ENCODE measurements at regions of chr6 and their contacts with region 1.

Region 1: DNA sequence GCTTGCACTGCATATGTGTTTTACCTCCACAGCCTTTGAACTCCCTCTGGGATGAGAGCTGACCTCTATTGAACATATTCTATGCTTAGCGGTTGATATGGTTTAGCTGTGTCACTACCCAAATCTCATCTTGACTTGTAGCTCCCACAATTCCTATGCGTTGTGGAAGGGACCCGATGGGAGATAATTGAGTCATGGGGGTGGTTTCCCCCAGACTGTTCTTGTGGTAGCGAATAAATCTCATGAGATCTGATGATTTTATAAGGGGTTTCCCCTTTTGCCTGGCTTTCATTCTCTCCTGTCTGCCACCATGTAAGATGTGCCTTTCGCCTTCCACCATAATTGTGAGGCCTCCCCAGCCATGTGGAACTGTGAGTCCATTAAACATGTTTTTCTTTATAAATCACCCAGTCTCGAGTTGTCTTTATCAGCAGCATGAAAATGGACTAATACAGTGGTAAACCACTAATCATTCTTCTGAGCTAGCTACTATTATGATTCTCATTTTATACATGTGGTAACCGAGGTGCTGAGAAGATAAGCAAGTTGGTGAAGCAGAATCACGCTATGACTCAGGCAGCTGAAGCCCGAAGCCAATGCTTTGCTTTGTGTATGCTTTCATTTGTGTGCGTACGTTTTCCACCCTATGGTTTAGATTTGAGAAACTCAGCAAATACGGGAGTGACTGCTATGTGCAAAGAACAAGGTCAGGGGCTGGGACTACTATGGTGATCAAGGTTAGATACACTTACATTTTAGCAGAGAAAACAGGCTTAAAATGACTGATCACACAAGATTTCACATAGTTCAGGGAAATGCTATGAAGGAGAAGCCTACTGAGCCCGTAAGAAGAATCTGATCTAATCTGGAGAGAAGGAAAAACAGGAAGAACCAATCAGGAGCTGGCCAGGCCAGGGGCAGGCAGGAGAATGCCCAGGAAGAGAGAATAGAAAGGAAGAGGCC is 363.5 kb downstream of the ESR1 start:
- DNase-seq: no peak
- ATAC-seq: peak; percentile 81
- H3K4me3 Mint-ChIP-seq: peak overlapping the region; percentile 61
- H3K27ac Mint-ChIP-seq: peak overlapping the region; percentile 93
- H3K4me1 Mint-ChIP-seq: peaks cover 38% of the 10 kb centered on the region
- H3K27me3 Mint-ChIP-seq: no peaks in the 10 kb centered on the region
- CTCF ChIP-seq: no peak

Region 2: GRCh38 chr6:151993364-151993763 is 177.6 kb before region 1 on chr6:
- CTCF ChIA-PET with region 1: no interaction called
- POLR2A ChIA-PET with region 1: no interaction called
- intact Hi-C with region 1: no loop called
- DNase-seq: no peak
- ATAC-seq: no peak
- H3K4me3 Mint-ChIP-seq: no peak overlapping the region
- H3K27ac Mint-ChIP-seq: no peak overlapping the region
- H3K4me1 Mint-ChIP-seq: no peaks in the 10 kb centered on the region
- H3K27me3 Mint-ChIP-seq: no peaks in the 10 kb centered on the region
- CTCF ChIP-seq: no peak

Region 3: DNA sequence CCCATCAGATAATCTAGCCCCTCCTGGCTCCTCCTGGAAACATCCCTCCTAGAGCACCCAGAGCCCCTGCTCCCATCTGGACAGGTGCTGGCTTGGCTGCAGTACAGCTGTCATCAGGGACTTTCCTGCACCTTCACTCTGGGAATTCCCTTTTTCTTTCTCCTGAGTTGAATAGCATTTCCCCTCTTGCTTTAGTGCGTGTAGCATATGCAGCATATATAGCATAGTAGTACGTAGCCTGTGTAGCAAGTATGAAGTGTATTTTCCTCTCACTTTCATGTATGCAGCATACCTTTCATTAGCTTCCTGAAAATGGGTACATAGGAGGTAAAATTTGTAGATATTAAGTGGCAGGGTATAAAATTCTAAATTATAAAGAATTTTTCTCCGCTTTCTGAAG is 10.6 kb before region 1 on chr6:
- CTCF ChIA-PET with region 1: no interaction called
- POLR2A ChIA-PET with region 1: interaction called, 5 read pairs
- intact Hi-C with region 1: loop called (anchors 1 kb)
- DNase-seq: no peak
- ATAC-seq: peak; percentile 97
- H3K4me3 Mint-ChIP-seq: peak overlapping the region; percentile 42
- H3K27ac Mint-ChIP-seq: peak overlapping the region; percentile 94
- H3K4me1 Mint-ChIP-seq: peaks cover 23% of the 10 kb centered on the region
- H3K27me3 Mint-ChIP-seq: no peaks in the 10 kb centered on the region
- CTCF ChIP-seq: no peak